Caki2 (cell line): ENCODE measurements at regions of chr1 and their contacts with region 1.

Region 1: GRCh38 chr1:6889875-6890480 is 104.7 kb downstream of the CAMTA1 start:
- DNase-seq: peak; percentile 35

Region 2: DNA sequence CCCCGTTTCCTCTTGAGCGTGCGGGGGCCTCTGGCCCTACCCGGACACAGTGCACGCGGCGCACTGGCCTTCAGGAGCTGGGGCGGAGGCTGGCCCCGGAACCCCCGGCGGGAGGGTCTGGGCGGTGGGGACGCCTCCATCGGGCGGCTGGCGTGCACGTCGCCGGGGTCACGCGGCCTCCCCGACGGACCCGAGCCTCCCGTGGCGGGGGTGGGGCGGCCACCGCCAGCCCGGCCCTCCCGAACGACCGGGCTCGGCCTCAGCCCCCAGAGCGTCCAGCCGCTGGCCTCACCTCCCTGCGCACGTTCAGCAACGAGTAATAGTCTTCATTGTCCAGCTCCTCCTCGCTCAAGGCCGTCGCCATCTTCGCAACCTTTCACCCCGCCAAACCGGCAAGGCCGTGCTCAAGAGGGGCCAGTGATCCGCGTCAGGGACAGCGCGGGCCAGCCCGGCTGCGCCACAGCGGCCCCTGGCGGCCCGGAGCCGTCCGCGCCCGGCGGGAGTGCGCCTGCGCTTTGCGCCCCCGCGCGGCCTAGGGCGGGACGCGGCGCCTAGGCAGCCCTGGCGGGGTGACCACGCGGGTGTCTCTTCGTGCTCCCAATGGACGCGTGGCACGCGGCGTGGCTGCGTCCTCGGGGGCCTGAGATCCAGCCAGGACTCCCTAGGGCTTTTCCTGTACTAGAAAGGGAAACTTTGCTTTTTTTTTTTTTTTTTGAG is 188.4 kb before region 1 on chr1 and contains the start of gene DNAJC11:
- in situ Hi-C with region 1: loop called (anchors 25 kb)
- DNase-seq: peak; percentile 83
- total RNA-seq, gene DNAJC11: 34.8 and 36.9 TPM in 2 replicates

Region 3: DNA sequence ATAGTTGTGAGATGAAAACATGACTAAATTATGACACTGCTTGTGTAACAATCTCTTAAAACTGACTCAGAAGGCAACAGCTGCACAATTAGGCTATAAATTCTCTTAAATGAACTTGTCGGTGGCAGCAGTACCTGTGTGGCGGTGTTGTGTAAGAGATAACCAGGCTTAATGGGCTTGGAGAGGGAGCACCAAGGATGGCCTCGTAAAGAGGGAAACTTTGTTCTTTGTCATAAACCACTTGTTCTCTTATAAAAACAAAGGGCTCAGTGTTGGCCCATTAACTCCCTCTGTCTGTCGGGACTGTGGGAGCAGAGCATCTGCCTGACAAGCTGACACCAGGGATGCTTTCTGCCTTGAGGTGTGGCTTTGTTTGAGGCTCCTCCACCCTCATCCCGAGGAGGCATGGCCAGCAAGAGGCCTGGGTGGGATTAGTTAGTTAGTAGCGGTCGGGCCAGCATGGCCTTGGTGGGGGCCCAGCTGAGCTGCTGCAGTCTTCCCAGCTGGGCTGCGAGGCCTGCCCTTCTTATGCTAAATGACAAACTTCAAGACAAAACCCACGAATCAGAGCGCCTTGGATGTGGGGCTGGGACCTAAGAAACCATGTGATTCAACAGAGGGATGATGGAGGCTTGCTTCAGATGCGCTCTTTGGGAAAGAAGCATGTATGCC is 66.6 kb after region 1 on chr1:
- in situ Hi-C with region 1: no loop called
- DNase-seq: peak; percentile 37